ENCODE measurements at regions of chr1 and their contacts with region 1.

Region 1: DNA sequence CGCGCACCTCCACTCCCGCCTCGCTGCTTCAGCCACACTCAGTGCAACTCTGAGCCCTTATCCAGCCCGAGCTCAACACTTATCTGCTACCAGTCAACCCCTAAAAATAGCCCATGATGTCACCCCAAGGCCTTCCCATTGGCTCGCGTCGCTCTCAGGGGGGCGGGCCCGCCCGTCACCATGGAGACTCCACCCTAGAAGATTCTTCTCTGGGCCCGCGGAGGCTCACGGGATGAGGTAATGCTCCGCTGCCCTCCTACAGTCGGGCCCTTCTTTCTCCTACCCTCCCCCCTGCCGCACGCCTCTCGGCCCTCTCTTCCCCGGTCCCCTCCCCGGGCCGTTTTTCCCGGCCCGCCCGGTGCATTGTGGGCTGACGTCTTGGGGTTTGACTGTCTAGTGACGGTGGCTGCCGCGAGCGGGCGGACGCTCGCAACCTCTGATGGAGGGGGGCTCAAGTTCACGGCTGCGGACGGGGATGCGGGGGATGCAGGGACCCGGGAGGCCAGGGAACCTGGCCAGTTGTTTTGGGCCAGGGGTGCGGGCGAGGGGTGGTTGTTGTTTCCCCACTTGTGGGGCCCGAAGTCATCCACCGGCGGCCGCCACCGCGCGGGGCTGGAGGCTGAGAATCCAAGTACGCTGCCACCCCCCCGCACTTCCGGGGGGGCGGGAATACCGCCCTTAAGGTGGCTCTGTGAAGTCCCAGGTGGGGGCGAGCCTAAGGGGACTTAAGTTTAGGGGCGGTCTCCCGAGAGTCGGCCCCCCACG is at the start of gene JUN:
- DNase-seq: peak; percentile 100
- ATAC-seq: peak; percentile 92
- H3K4me3 ChIP-seq: peak within 1 kb of the TSS; percentile 93 to 94
- H3K27ac ChIP-seq: peak within 1 kb of the TSS; percentile 91 to 100
- H3K4me1 ChIP-seq: no peaks in the 10 kb centered on the region
- H3K27me3 ChIP-seq: no peaks in the 10 kb centered on the region
- total RNA-seq, gene JUN: 101 to 275 TPM

Region 2: GRCh38 chr1:58816072-58816746 is 32.0 kb after region 1 on chr1:
- intact Hi-C with region 1: loop called (anchors 2 kb)
- DNase-seq: peak; percentile 96 to 97
- ATAC-seq: peak; percentile 94
- H3K4me3 ChIP-seq: peak overlapping the region; percentile 57 to 68
- H3K27ac ChIP-seq: peak overlapping the region; percentile 94
- H3K4me1 ChIP-seq: no peaks in the 10 kb centered on the region
- H3K27me3 ChIP-seq: no peaks in the 10 kb centered on the region

Region 3: GRCh38 chr1:58908561-58909560 is 124.7 kb after region 1 on chr1:
- intact Hi-C with region 1: loop called in 1 of 2 experiments (anchors 5 kb)
- DNase-seq: no peak
- ATAC-seq: no peak
- H3K4me3 ChIP-seq: no peak overlapping the region
- H3K27ac ChIP-seq: peak overlapping the region in 1 of 2 donors; percentile 28
- H3K4me1 ChIP-seq: no peaks in the 10 kb centered on the region
- H3K27me3 ChIP-seq: no peaks in the 10 kb centered on the region

Region 4: GRCh38 chr1:59057211-59057694 is 273.1 kb after region 1 on chr1:
- intact Hi-C with region 1: loop called in 1 of 2 experiments (anchors 5 kb)
- DNase-seq: peak; percentile 75 to 87
- ATAC-seq: peak; percentile 91
- H3K4me3 ChIP-seq: no peak overlapping the region
- H3K27ac ChIP-seq: peak overlapping the region in 1 of 2 donors; percentile 71
- H3K4me1 ChIP-seq: peaks cover 0 to 2% of the 10 kb centered on the region in 2 donors
- H3K27me3 ChIP-seq: no peaks in the 10 kb centered on the region

Region 5: GRCh38 chr1:59163268-59164092 is 379.3 kb after region 1 on chr1:
- intact Hi-C with region 1: loop called in 1 of 2 experiments (anchors 5 kb)
- DNase-seq: no peak
- ATAC-seq: no peak
- H3K4me3 ChIP-seq: no peak overlapping the region
- H3K27ac ChIP-seq: peak overlapping the region; percentile 67 to 82
- H3K4me1 ChIP-seq: peaks cover 9 to 16% of the 10 kb centered on the region in 2 donors
- H3K27me3 ChIP-seq: no peaks in the 10 kb centered on the region

Region 6: GRCh38 chr1:59296358-59297256 is 512.4 kb after region 1 on chr1 and contains the start of gene FGGY:
- intact Hi-C with region 1: loop called in 1 of 2 experiments (anchors 2 kb)
- DNase-seq: peak; percentile 98 to 100
- ATAC-seq: peak; percentile 96
- H3K4me3 ChIP-seq: peak within 1 kb of the TSS; percentile 54 to 75
- H3K27ac ChIP-seq: peak within 1 kb of the TSS; percentile 87 to 93
- H3K4me1 ChIP-seq: peaks cover 3 to 5% of the 10 kb centered on the region in 2 donors
- H3K27me3 ChIP-seq: no peaks in the 10 kb centered on the region
- total RNA-seq, gene FGGY: 17.3 to 25.1 TPM

Region 7: DNA sequence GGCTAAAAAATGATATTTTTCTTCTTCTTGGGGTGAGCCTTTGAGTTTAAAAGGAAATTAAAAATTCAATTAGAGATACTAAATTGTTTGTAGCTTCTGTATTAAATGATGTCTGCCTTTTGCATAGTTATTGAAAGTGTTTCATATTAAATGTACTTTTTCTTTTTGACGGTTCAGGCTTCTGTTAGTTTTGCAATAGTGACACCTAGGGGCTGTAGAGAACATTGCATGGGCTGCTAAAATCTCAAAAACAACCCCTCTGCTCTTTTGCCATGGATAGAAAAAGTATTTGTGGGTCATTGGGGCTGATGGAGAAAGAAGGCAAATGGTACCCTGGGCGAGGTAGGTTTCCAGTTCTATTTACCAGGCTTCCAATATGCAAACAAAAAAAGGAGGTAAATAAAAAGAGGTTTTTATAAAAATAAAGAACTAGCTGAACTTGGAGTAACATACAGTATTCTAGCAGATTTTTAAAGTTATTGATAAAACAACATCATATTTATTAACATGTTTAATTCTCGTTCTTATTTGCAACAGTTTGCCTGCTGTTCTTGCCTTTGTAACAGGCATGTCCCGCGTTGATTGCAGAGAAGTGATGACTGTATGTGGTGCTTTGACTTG is 915.2 kb after region 1 on chr1:
- intact Hi-C with region 1: loop called in 1 of 2 experiments (anchors 2 kb)
- DNase-seq: no peak
- ATAC-seq: peak; percentile 60
- H3K4me3 ChIP-seq: no peak overlapping the region
- H3K27ac ChIP-seq: no peak overlapping the region
- H3K4me1 ChIP-seq: peaks cover 3 to 11% of the 10 kb centered on the region in 2 donors
- H3K27me3 ChIP-seq: no peaks in the 10 kb centered on the region

Measured in aorta (tissue), 5 donors.